SK-N-SH (cell line): ENCODE measurements at regions of chr17 and their contacts with region 1.

Region 1: DNA sequence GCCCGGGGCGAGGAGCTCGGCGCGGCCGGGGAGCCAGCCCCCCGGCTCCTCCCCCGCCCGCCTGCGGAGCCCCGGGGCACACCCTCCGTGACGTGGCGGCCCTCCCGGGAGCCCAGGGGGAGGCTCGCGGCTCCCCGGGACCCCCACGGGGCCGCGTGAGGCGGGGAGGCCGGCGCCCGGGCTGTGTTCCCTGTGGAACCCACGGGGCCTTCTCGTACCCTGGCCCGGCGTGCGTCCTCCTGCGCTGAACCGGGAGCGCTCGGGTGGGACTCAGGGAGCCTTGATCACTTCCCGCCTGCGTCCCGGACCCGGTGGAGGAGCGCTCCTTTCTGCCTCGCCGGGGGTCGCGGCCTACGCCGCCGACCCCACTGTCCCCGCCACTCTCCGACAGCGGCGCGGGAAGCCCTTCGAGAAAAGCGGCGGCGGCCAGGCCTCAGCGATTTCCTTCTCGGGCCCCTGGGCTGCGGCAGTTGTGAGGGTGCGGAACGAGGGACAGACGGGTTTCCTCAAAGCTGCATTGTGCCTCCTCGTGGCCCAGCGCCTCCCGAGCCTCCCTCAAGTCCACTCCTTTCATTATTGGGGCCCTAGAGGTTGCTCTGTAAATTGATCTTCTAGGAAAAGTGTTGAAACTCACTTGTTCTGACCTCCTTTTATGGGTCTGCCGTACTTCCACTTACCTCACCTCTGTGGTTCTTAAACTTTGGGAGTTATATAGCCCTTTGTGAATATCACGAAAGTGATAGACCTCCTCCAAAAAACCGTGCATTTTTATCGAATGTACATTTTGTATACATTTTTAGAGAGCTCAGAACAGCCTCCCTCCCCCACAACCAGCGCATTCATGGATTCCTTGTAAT is 597 bp downstream of the LIG3 start:
- DNase-seq: peak; percentile 95
- H3K4me3 ChIP-seq: peak overlapping the region; percentile 71 to 80
- H3K27ac ChIP-seq: peak overlapping the region; percentile 91 to 94
- H3K4me1 ChIP-seq: peaks cover 0 to 15% of the 10 kb centered on the region in 2 experiments; a peak in 2 of 4 replicates
- H3K27me3 ChIP-seq: no peaks in the 10 kb centered on the region
- CTCF ChIP-seq: peak; percentile 55
- EP300 ChIP-seq: no peak; a peak in 1 of 4 replicates
- RAD21 ChIP-seq: peak; percentile 50

Region 2: DNA sequence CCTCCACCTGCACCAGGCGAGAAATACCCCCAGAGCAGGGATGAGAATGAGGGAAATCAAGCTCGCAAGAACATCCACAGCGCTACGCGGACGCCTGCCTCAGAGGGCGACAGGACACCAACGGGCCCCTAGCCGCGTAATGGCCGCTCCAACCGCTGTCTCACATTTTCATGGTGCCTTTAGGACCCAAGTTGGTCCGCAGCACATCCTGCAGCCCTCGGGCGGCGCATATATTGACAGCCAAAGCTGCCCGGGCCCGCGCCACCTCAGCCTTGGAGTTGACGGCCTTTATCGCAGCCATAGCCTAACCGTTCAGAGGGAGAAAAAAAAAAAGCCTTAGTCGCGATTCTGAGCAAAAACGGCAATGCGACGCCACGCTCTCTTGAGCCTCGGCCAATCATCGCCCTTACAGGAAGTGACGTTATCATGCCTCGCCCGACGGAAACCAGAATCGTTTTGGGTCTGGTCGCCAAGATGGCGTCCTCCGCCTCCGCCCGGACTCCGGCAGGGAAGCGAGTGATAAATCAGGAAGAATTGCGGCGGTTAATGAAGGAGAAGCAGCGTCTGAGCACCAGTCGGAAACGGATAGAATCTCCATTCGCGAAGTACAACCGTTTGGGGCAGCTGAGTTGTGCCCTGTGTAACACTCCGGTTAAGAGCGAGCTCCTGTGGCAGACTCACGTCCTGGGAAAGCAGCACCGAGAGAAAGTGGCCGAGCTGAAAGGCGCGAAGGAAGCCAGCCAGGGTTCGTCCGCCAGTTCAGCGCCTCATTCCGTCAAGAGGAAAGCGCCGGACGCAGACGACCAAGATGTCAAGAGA is 19.6 kb before region 1 on chr17 and contains the starts of genes CCT6B and ZNF830:
- CTCF ChIA-PET with region 1: no interaction called
- POLR2A ChIA-PET with region 1: interaction called, 12 read pairs
- DNase-seq: peak; percentile 87
- H3K4me3 ChIP-seq: peak within 1 kb of the TSS; percentile 97 to 99
- H3K27ac ChIP-seq: peak within 1 kb of the TSS; percentile 87 to 96
- H3K4me1 ChIP-seq: peaks cover 4 to 10% of the 10 kb centered on the region in 2 experiments; a peak in 3 of 4 replicates
- H3K27me3 ChIP-seq: no peaks in the 10 kb centered on the region
- CTCF ChIP-seq: no peak
- EP300 ChIP-seq: peak in 1 of 2 experiments; percentile 35; a peak in 1 of 4 replicates
- RAD21 ChIP-seq: no peak
- polyA plus RNA-seq, gene CCT6B: 0.48 and 0.57 TPM in 2 replicates
- polyA plus RNA-seq, gene ZNF830: 7.8 and 8.8 TPM in 2 replicates

Region 3: GRCh38 chr17:35041390-35041789 is 60.5 kb after region 1 on chr17:
- CTCF ChIA-PET with region 1: no interaction called
- POLR2A ChIA-PET with region 1: no interaction called
- DNase-seq: no peak
- H3K4me3 ChIP-seq: no peak overlapping the region
- H3K27ac ChIP-seq: no peak overlapping the region
- H3K4me1 ChIP-seq: peaks cover 0 to 8% of the 10 kb centered on the region in 2 experiments; a peak in 1 of 4 replicates
- H3K27me3 ChIP-seq: no peaks in the 10 kb centered on the region
- CTCF ChIP-seq: no peak
- EP300 ChIP-seq: no peak
- RAD21 ChIP-seq: no peak